Tibial artery (tissue), 4 donors: ENCODE measurements at regions of chr1 and their contacts with region 1.

Region 1: GRCh38 chr1:112488141-112488540 is 20.6 kb upstream of the WNT2B start:
- DNase-seq: no peak
- H3K4me3 ChIP-seq: no peak overlapping the region
- H3K27ac ChIP-seq: no peak overlapping the region
- H3K4me1 ChIP-seq: no peaks in the 10 kb centered on the region
- H3K27me3 ChIP-seq: no peaks in the 10 kb centered on the region
- CTCF ChIP-seq: no peak

Region 2: DNA sequence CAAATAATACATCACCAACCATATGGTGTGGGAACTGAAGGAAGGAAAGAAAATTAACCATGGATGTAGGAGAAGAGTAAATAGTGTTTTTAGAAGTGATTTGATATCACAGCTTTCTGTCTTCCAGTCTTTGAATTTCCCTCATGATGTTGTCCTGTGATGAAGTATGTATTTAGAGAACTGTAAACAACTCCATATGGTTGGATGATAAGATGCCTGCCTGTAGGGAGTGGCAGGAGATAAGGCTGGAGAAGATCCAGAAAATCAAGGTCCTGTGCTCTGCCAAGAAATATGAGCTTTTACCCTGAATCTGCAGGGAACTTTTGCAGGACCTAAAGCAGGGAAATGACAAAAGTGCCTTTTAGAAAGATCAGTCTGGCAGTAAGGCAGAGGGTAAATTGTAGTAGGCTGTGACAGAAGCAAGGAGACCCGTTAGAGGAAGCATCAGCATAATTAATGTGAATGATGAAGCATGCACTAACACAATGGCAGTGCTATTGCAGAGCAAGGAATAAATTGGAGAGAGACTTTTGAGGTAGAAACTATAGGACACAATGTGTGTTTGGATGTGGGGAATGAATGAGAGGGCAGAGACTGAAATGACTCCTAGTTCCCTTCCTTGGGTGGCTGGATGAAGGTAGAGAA is 1326.2 kb before region 1 on chr1:
- intact Hi-C with region 1: no loop called
- DNase-seq: no peak
- H3K4me3 ChIP-seq: no peak overlapping the region
- H3K27ac ChIP-seq: no peak overlapping the region
- H3K4me1 ChIP-seq: no peaks in the 10 kb centered on the region
- H3K27me3 ChIP-seq: no peaks in the 10 kb centered on the region
- CTCF ChIP-seq: no peak

Region 3: DNA sequence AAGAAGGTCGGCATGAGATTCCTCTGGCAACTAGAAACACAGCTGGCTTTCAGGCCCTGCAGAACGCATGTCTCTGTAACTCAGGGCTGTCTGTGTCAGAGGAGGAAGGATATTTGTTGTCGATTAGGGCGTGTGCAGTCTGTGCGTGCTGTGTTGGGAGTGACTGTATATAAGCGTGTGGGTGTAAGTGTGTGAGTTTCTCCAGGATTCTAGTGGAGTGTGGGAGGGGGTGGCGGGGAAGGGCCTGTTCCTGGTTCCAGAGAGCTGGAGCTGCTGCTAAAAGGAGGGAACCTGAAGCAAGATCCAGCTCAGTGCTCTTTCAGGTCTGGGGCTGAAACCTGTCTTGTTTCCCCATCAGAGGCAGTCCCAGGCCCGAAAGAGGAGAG is 393.6 kb after region 1 on chr1:
- intact Hi-C with region 1: loop called (anchors 5 kb)
- DNase-seq: no peak
- H3K4me3 ChIP-seq: no peak overlapping the region
- H3K27ac ChIP-seq: no peak overlapping the region
- H3K4me1 ChIP-seq: no peaks in the 10 kb centered on the region
- H3K27me3 ChIP-seq: no peaks in the 10 kb centered on the region
- CTCF ChIP-seq: no peak